ENCODE measurements at regions of chr20 and their contacts with region 1.

Region 1: GRCh38 chr20:54207743-54208547 is at the start of gene PFDN4:
- DNase-seq: peak; percentile 89 to 95 (median 94)
- ATAC-seq: peak; percentile 96
- H3K4me3 ChIP-seq: peak within 1 kb of the TSS; percentile 98
- H3K27ac ChIP-seq: peak within 1 kb of the TSS; percentile 100
- H3K4me1 ChIP-seq: peaks cover 6 to 11% of the 10 kb centered on the region in 2 experiments; a peak in 3 of 5 replicates
- H3K27me3 ChIP-seq: no peaks in the 10 kb centered on the region
- CTCF ChIP-seq: peak; percentile 81 to 91 (median 82)
- EP300 ChIP-seq: no peak
- POLR2A ChIP-seq: peak; percentile 71
- RAD21 ChIP-seq: peak; percentile 16 to 31; a peak in 1 of 4 replicates
- polyA plus RNA-seq, gene PFDN4: 112 to 144 TPM

Region 2: DNA sequence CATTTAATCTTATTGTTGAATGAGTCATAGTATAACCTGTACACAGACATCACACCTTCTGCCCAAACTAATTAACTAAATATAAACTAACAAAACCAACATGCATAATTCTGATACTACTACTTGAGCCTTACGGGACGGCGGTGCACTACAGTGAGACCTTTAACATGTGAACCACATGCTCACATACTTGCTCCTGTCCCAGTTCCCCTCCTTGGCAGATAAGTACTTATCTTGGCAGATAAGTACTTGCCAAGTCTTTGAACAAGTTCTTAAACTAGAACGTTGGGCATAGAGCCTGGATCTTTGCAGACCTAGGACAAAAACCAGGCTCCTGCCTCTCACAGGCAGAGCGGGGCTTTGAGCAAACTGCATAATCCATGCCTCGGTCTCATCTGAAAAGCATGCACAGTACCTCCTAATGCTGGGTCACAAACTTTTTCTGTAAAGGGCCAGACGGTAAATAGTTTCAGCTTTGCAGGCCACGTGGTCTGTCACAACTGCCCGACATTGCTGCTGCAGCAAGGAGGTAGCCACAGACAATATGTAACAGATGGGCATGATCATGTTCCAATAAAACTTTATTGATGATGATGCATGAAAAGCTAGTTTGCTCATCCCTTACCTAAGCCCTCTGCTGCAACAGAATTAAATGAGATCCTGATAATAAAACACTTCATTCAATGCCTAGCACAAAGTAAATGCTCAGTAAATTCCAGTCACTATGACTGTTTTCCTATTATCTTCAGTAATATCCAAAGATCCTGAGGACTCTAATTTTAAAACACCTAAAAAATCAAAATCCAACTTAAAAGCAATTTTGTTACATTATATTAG is 637.2 kb before region 1 on chr20:
- CTCF ChIA-PET with region 1: no interaction called
- POLR2A ChIA-PET with region 1: no interaction called
- in situ Hi-C with region 1: loop called (anchors 25 kb)
- intact Hi-C with region 1: no loop called
- DNase-seq: no peak
- ATAC-seq: no peak
- H3K4me3 ChIP-seq: no peak overlapping the region
- H3K27ac ChIP-seq: no peak overlapping the region
- H3K4me1 ChIP-seq: no peaks in the 10 kb centered on the region
- H3K27me3 ChIP-seq: no peaks in the 10 kb centered on the region
- CTCF ChIP-seq: no peak
- EP300 ChIP-seq: no peak
- POLR2A ChIP-seq: no peak
- RAD21 ChIP-seq: no peak

Region 3: GRCh38 chr20:54086483-54087039 is 121.4 kb before region 1 on chr20:
- CTCF ChIA-PET with region 1: no interaction called
- POLR2A ChIA-PET with region 1: no interaction called
- in situ Hi-C with region 1: no loop called
- intact Hi-C with region 1: no loop called
- DNase-seq: no peak
- ATAC-seq: no peak; the same call in 2 of the 3 replicates
- H3K4me3 ChIP-seq: no peak overlapping the region
- H3K27ac ChIP-seq: no peak overlapping the region
- H3K4me1 ChIP-seq: no peaks in the 10 kb centered on the region; a peak in 1 of 5 replicates
- H3K27me3 ChIP-seq: peaks cover 5 to 10% of the 10 kb centered on the region in 2 experiments; a peak in 4 of 5 replicates
- CTCF ChIP-seq: no peak
- EP300 ChIP-seq: no peak
- POLR2A ChIP-seq: no peak
- RAD21 ChIP-seq: no peak

Measured in K562 (cell line).